Activated CD4-positive, alpha-beta T cell treated with anti-CD3 and anti-CD28 coated beads for 36 hours (primary cell): ENCODE measurements at regions of chr10 and their contacts with region 1.

Region 1: DNA sequence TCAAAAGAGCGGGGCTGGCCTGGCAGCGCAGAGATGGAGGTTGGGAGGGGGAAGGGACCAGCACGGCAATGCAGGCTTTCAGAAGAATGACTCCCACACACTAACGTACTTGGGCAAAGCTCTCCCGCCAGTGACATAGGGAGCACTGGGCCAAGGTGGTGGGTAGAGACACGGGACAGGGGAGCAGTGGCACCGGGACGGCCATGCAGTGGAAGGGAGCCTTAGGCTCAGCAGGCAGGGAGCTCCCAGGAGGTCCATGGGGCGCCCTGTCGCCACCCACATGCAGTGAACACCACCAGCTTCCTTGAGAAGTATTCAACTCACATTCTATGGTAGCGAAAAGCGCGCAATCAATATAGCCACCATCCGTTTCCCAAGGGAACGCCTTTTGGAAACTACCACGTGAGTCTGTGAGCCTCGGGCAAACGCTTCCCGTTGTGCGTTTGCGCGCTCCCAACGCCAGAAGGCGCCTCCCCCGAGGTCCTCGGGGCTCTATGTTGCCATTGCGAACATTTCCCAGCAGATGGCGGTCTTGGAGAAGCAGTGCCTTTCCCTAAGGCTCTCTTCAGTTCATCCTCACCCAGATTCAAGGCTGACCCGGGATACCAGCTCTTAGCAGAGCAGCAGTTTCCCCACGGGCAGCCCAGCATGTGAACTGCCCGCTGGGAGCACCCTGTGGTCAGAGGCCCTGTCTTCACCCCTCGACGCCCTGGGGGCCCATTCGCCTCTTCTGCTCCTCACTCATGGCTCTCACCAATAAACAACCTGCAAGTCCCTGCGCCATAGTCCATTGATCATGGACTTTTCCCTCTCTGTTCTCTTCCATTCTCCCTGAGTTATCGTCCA is 16.4 kb upstream of the OPALIN start:
- DNase-seq: peak; percentile 88
- ATAC-seq: peak; percentile 93
- H3K4me3 Mint-ChIP-seq: peak overlapping the region; percentile 65
- H3K27ac Mint-ChIP-seq: no peak overlapping the region
- H3K4me1 Mint-ChIP-seq: peaks cover 9% of the 10 kb centered on the region
- H3K27me3 Mint-ChIP-seq: peaks cover 4% of the 10 kb centered on the region

Region 2: DNA sequence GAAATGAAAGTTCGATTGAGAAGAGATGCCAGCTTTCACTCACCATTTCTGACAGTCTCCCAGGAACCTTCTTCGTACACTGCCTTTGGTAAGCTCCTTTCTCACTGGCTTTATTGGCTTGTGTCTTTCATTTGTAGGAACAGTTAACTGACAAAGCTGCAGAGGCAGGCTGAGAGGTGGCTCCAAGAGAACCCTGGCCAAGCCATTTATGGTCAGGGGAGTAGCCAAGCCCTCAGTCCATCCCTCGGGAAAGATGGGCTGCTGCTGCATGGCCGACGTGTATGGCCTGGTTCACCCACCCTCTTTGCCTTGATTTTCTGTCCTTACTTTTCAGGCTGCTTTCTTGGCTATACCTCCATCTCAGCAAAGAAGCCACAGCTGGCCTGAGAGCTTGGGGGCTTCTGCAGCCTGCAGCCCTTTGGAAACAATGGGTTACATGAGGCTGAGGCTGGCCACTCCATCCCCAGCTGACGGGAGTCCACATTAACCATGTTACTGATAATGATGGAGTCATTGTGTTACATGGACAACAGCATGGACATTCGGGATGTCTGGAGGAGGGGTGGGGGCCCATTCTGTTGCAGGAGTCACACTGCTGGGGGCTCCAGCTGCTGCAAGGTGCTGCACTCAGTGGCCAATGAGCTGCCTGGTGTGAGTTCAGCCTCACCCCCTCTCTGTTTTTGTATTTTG is 16.2 kb before region 1 on chr10 and contains the start of gene OPALIN:
- CTCF ChIA-PET with region 1: interaction called, 18 read pairs
- POLR2A ChIA-PET with region 1: no interaction called
- intact Hi-C with region 1: no loop called
- DNase-seq: no peak
- ATAC-seq: no peak
- H3K4me3 Mint-ChIP-seq: no peak within 1 kb of the TSS
- H3K27ac Mint-ChIP-seq: no peak within 1 kb of the TSS
- H3K4me1 Mint-ChIP-seq: no peaks in the 10 kb centered on the region
- H3K27me3 Mint-ChIP-seq: peaks cover 8% of the 10 kb centered on the region
- total RNA-seq, gene OPALIN: not detected

Region 3: GRCh38 chr10:96513698-96514561 is 138.7 kb after region 1 on chr10 and contains the start of gene TLL2:
- CTCF ChIA-PET with region 1: interaction called, 7 read pairs
- POLR2A ChIA-PET with region 1: no interaction called
- intact Hi-C with region 1: loop called (anchors 1 kb)
- DNase-seq: peak; percentile 80
- ATAC-seq: peak; percentile 87
- H3K4me3 Mint-ChIP-seq: peak within 1 kb of the TSS; percentile 57
- H3K27ac Mint-ChIP-seq: no peak within 1 kb of the TSS
- H3K4me1 Mint-ChIP-seq: peaks cover 10% of the 10 kb centered on the region
- H3K27me3 Mint-ChIP-seq: peaks cover 43% of the 10 kb centered on the region
- total RNA-seq, gene TLL2: 0.02 TPM in 1 of 2 experiments, not detected in the other

Region 4: GRCh38 chr10:96700374-96701099 is 325.3 kb after region 1 on chr10:
- CTCF ChIA-PET with region 1: no interaction called
- POLR2A ChIA-PET with region 1: no interaction called
- intact Hi-C with region 1: no loop called
- DNase-seq: no peak
- ATAC-seq: no peak
- H3K4me3 Mint-ChIP-seq: no peak overlapping the region
- H3K27ac Mint-ChIP-seq: no peak overlapping the region
- H3K4me1 Mint-ChIP-seq: peaks cover 10% of the 10 kb centered on the region
- H3K27me3 Mint-ChIP-seq: no peaks in the 10 kb centered on the region